ENCODE measurements at regions of chr3 and their contacts with region 1.

Region 1: GRCh38 chr3:4978204-4978965 is 852 bp upstream of the BHLHE40 start:
- DNase-seq: peak; percentile 78
- ATAC-seq: peak; percentile 52
- H3K4me3 ChIP-seq: peak overlapping the region; percentile 72
- H3K27ac ChIP-seq: peak overlapping the region; percentile 84
- H3K4me1 ChIP-seq: peaks cover 27% of the 10 kb centered on the region
- H3K27me3 ChIP-seq: no peaks in the 10 kb centered on the region
- CTCF ChIP-seq: no peak
- EP300 ChIP-seq: peak; percentile 60 to 80; a peak in 3 of 4 replicates
- POLR2A ChIP-seq: peak; percentile 89
- RAD21 ChIP-seq: 0 out of 2 replicates have a peak, but pooled peaks have one; percentile 5

Region 2: DNA sequence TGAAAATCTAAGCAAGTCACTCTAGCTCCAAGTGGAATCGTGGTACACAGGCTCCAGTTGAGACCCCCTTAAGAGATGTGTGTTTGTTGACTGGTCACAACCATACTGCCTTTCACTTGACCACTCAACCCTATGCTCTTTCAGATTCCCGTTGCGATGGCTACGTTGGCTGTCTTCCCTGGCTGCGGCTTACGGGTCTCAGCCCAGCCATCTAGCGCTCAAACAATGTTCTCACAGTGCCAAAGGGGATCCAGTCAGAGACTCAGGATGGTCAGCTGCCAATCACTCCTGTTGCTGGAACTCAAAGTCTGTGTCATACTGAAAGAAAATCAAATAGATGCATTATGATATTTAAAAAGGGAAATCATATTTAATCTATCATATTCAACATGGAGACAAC is 247.7 kb before region 1 on chr3:
- CTCF ChIA-PET with region 1: interaction called, 12 read pairs
- POLR2A ChIA-PET with region 1: interaction called, 4 read pairs
- RAD21 ChIA-PET with region 1: interaction called, 6 read pairs
- SMC1A ChIA-PET with region 1: interaction called, 8 read pairs
- in situ Hi-C with region 1: no loop called
- intact Hi-C with region 1: no loop called
- DNase-seq: no peak
- ATAC-seq: no peak
- H3K4me3 ChIP-seq: no peak overlapping the region
- H3K27ac ChIP-seq: no peak overlapping the region
- H3K4me1 ChIP-seq: no peaks in the 10 kb centered on the region
- H3K27me3 ChIP-seq: no peaks in the 10 kb centered on the region
- CTCF ChIP-seq: no peak
- EP300 ChIP-seq: no peak
- POLR2A ChIP-seq: no peak
- RAD21 ChIP-seq: no peak

Region 3: DNA sequence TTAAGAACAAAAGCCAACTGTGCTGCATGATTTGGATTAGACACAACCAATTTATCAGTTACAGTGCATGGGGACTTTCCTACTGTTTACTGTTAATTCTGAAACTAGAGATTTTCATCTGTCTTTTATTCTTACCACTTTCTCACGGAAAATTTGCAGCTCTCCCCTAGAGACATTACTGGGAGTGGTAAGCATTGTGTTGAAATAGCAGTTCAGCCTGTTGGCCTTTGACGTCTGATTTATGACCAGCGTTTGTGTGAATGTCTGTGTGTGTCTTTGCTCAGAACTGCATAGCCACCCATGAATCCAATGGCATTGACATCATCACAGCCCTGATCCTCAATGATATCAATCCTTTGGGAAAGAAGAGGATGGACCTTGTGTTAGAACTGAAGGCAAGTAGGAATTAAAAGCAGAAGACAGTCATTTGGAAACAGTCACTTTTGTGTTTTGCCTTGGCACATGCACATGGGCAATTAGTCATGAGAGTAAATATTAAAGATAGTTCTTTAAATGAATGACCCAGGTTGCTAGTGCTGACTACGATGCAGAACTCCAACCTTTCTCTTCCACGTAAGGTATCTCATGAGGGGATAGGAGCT is 201.3 kb before region 1 on chr3:
- CTCF ChIA-PET with region 1: interaction called, 32 read pairs
- POLR2A ChIA-PET with region 1: interaction called, 14 read pairs
- RAD21 ChIA-PET with region 1: interaction called, 47 read pairs
- SMC1A ChIA-PET with region 1: interaction called, 36 read pairs
- in situ Hi-C with region 1: no loop called
- intact Hi-C with region 1: loop called (anchors 1 kb)
- DNase-seq: peak; percentile 98
- ATAC-seq: peak; percentile 82
- H3K4me3 ChIP-seq: no peak overlapping the region
- H3K27ac ChIP-seq: peak overlapping the region; percentile 99
- H3K4me1 ChIP-seq: peaks cover 32% of the 10 kb centered on the region
- H3K27me3 ChIP-seq: no peaks in the 10 kb centered on the region
- CTCF ChIP-seq: no peak
- EP300 ChIP-seq: peak; percentile 90 to 97; a peak in 3 of 4 replicates
- POLR2A ChIP-seq: peak; percentile 53; the same call in 1 of the 2 replicates
- RAD21 ChIP-seq: peak; percentile 41

Region 4: GRCh38 chr3:4880850-4881249 is 97.5 kb before region 1 on chr3:
- CTCF ChIA-PET with region 1: interaction called, 10 read pairs
- POLR2A ChIA-PET with region 1: no interaction called
- RAD21 ChIA-PET with region 1: interaction called, 3 read pairs
- SMC1A ChIA-PET with region 1: interaction called, 3 read pairs
- in situ Hi-C with region 1: no loop called
- intact Hi-C with region 1: no loop called
- DNase-seq: no peak
- ATAC-seq: no peak
- H3K4me3 ChIP-seq: no peak overlapping the region
- H3K27ac ChIP-seq: no peak overlapping the region
- H3K4me1 ChIP-seq: no peaks in the 10 kb centered on the region
- H3K27me3 ChIP-seq: no peaks in the 10 kb centered on the region
- CTCF ChIP-seq: no peak
- EP300 ChIP-seq: no peak
- POLR2A ChIP-seq: no peak
- RAD21 ChIP-seq: no peak

Region 5: DNA sequence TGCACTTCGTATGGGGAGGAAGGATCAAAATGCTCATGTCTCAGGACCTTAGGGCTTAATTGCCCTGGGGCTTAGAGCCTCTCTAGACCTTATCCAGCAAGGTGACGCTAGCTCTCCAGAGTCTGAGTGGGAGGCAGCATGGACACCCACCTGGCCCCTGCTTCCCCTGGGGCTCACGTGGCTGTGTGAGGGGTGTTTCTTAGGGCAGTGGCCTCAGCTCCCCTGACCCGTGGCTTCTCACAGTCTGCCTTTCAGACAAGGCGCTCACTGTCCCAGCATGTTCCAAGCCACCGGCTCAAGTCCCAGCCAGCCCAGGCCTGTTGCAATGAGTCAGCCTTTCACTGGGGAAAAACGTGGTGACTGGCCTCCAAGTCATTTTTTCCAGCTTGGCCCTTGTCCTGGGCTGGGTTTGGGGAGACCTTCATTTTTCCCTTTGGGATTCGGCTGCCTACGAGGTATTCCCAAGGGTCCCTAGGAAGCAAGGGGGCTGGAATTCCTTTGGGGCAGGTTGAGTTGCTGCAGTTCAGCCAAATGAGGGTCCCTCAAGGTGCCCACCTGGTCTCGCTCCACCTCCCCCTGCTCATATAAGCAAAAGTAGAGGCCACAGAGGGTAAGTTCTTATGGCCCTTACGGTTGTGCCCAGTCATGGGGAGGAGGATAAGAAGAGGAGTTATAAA is 16.6 kb after region 1 on chr3:
- CTCF ChIA-PET with region 1: interaction called, 330 read pairs
- POLR2A ChIA-PET with region 1: interaction called, 30 read pairs
- RAD21 ChIA-PET with region 1: interaction called, 45 read pairs
- SMC1A ChIA-PET with region 1: interaction called, 65 read pairs
- in situ Hi-C with region 1: no loop called
- intact Hi-C with region 1: no loop called
- DNase-seq: no peak
- ATAC-seq: peak; percentile 75
- H3K4me3 ChIP-seq: no peak overlapping the region
- H3K27ac ChIP-seq: peak overlapping the region; percentile 7; the same call in 1 of the 2 replicates
- H3K4me1 ChIP-seq: peaks cover 10% of the 10 kb centered on the region
- H3K27me3 ChIP-seq: no peaks in the 10 kb centered on the region
- CTCF ChIP-seq: no peak
- EP300 ChIP-seq: no peak
- POLR2A ChIP-seq: 0 out of 2 replicates have a peak, but pooled peaks have one; percentile 31
- RAD21 ChIP-seq: no peak

Region 6: DNA sequence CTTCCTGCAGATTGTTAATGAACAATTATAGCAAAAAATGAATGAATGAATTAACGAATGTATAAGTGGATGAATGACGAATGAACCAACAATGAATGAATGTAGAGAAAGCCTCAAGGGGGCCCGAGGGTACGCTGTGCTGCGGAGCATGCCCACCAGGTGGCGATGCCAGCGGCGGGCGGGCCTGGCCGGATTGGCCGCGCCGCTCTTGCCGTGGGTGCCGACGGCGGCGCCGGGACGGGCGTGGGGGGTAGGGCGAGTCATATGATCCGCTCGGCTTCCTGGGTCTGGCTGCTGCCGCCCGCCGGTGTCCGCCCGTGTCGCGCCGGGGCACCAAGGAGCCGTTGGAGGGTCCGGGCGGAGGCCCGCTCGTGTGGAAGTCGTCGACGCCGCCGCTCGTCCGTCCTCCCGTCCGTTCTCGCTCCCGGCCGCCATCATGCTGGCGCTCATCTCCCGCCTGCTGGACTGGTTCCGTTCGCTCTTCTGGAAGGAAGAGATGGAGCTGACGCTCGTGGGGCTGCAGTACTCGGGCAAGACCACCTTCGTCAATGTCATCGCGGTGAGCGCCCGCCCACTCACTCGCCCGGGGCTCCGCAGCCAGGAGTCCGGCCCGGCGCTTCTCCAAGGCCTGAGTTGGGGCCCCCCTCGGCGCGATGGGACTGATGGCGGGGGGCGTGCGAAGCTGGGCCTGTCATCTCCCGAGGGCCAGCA is 143.8 kb after region 1 on chr3 and contains the start of gene ARL8B:
- CTCF ChIA-PET with region 1: no interaction called
- POLR2A ChIA-PET with region 1: no interaction called
- RAD21 ChIA-PET with region 1: no interaction called
- SMC1A ChIA-PET with region 1: interaction called, 3 read pairs
- in situ Hi-C with region 1: no loop called
- intact Hi-C with region 1: loop called (anchors 5 kb)
- DNase-seq: no peak
- ATAC-seq: peak; percentile 97
- H3K4me3 ChIP-seq: peak within 1 kb of the TSS; percentile 76
- H3K27ac ChIP-seq: peak within 1 kb of the TSS; percentile 78
- H3K4me1 ChIP-seq: no peaks in the 10 kb centered on the region
- H3K27me3 ChIP-seq: no peaks in the 10 kb centered on the region
- CTCF ChIP-seq: peak; percentile 88 to 99 (median 97); a peak in 5 of 6 replicates
- EP300 ChIP-seq: peak; percentile 36 to 66; a peak in 2 of 4 replicates
- POLR2A ChIP-seq: peak; percentile 98
- RAD21 ChIP-seq: peak; percentile 51; the same call in 1 of the 2 replicates
- polyA plus RNA-seq, gene ARL8B: 36.5 to 38.5 TPM